Mammary epithelial cell (primary cell): ENCODE measurements at regions of chr1 and their contacts with region 1.

Region 1: DNA sequence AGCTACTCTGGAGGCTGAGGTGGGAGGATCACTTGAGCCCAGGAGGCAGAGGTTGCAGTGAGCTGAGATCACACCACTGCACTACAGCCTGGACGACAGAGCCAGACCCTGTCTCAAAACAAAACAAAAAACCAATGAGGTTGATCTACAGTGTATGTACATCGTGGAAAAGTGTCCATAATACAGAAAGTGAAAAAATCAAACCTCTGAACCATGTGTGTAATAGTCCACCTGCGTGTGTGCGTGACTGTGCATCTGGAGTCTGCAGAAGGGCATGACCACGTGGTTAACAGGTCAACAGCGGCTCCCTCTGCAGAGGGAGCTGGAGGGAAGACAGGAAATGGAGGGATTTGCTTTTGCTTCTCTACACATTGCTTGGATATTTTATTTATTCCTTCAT is 32.4 kb upstream of the ENO1 start:
- DNase-seq: peak; percentile 63
- H3K4me3 ChIP-seq: no peak overlapping the region
- H3K27ac ChIP-seq: peak overlapping the region; percentile 17
- H3K4me1 ChIP-seq: peaks cover 21% of the 10 kb centered on the region
- H3K27me3 ChIP-seq: no peaks in the 10 kb centered on the region
- CTCF ChIP-seq: no peak

Region 2: DNA sequence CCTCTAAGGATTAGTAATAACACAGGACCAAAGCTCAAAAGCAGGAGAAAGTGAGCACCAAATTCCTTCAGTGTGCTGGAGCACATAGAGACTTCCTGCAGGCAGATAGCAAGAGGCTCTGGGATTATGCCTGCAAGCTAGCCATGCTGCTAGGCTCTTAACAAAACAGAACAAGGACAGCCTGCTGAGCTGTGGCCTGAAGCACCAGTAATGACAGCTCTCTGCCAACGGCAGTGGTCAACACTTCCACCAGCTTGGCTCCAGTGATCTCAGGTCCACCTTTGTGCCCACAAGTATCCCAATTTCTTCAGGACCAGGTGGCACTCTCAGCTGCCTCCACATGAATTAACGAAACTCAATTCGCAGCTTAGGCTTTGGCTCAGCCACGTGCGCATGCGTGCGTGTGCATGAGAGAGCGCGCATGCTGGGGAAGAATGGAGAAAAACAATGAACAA is 528.8 kb before region 1 on chr1:
- CTCF ChIA-PET with region 1: no interaction called
- dilution Hi-C with region 1: no loop called
- in situ Hi-C with region 1: no loop called
- intact Hi-C with region 1: no loop called
- DNase-seq: no peak
- H3K4me3 ChIP-seq: no peak overlapping the region
- H3K27ac ChIP-seq: peak overlapping the region; percentile 9
- H3K4me1 ChIP-seq: peaks cover 16% of the 10 kb centered on the region
- H3K27me3 ChIP-seq: no peaks in the 10 kb centered on the region
- CTCF ChIP-seq: no peak

Region 3: DNA sequence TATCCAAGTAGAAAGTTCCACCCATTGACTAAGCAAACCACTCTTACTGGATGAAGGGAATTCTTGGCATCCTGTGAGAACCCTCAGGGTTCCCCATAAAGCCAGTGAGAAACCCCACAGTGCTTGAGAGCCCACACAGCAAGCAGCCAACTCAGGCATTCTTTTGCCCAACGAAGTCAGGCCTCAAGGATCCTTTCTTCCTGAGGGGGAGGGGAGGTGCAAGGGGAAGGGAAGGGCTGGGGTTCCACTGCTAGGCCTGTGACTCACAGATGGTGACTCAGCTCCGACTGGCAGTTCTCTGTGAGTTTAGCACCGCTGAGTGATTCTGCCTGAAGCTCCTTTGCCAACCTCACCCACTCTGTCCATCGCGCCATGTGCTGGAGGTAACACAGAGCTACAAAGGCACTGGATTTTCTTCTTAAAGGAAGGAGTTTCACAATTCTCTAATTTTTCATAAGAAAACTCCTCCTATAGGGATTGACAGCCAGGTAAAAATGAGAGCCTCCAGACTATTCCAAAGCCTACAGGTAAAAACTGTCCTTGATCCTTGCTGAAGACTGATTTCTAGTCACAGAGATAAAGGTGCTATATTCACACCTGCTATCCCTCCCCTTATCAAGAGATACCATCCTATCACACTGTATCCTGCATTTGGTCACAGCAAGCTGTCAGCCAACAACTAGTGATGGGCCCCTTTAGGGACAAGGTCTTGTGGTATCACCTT is 37.2 kb before region 1 on chr1:
- CTCF ChIA-PET with region 1: no interaction called
- dilution Hi-C with region 1: no loop called
- in situ Hi-C with region 1: no loop called
- intact Hi-C with region 1: loop called (anchors 1 kb)
- DNase-seq: peak; percentile 99
- H3K4me3 ChIP-seq: peak overlapping the region in 2 of 3 experiments; percentile 4 to 35
- H3K27ac ChIP-seq: peak overlapping the region; percentile 93
- H3K4me1 ChIP-seq: peaks cover 61% of the 10 kb centered on the region
- H3K27me3 ChIP-seq: no peaks in the 10 kb centered on the region
- CTCF ChIP-seq: no peak

Region 4: GRCh38 chr1:8992936-8993687 is 82.2 kb after region 1 on chr1:
- CTCF ChIA-PET with region 1: interaction called, 3 read pairs
- dilution Hi-C with region 1: loop called (anchors 5 kb)
- in situ Hi-C with region 1: loop called in 1 of 2 experiments (anchors 5 kb)
- intact Hi-C with region 1: no loop called
- DNase-seq: no peak
- H3K4me3 ChIP-seq: no peak overlapping the region
- H3K27ac ChIP-seq: no peak overlapping the region
- H3K4me1 ChIP-seq: no peaks in the 10 kb centered on the region
- H3K27me3 ChIP-seq: no peaks in the 10 kb centered on the region
- CTCF ChIP-seq: peak in 1 of 2 donors; percentile 10

Region 5: DNA sequence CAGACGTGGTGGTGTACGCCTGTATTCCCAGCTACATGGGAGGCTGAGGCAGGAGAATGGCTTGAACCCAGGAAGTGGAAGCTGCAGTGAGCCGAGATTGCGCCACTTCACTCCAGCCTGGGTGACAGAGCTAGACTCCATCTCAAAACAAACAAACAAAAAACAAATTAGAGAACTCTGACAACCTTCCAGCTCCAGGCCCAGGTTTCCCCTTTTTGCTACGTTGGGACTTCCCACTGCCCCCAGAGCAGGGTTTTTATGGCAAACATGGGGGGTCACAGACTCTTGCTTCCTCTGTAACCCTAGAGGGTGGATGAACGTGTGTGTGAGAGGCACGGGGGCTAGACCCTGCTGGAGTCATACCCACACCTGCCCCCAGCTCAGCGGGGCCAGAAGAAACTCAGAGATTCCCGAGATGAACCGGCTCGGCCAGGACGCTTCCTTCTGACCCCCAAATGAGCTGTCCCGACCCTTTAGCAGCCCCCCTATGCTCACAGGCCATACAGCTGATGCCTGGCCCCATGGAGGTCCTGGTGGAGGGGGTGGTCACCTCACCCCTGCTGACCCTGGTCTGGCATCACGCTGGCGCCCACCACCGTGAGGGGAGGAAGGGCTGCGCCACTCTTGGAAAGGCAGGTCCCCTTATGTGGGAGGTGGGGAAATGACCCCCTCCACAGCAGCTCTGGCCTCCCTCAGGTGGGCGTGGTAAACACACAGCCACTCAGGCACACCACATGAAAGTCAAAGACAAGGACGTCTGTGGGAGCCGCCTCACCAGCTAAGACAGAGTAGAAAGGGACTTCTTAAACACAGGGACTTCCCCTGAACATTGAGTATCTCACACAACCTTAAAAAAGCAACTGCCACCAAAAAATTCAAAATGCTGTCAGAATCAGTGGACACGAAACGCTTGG is 210.8 kb after region 1 on chr1:
- CTCF ChIA-PET with region 1: no interaction called
- dilution Hi-C with region 1: no loop called
- in situ Hi-C with region 1: no loop called
- intact Hi-C with region 1: no loop called
- DNase-seq: no peak
- H3K4me3 ChIP-seq: no peak overlapping the region
- H3K27ac ChIP-seq: no peak overlapping the region
- H3K4me1 ChIP-seq: no peaks in the 10 kb centered on the region
- H3K27me3 ChIP-seq: no peaks in the 10 kb centered on the region
- CTCF ChIP-seq: no peak